Dendritic cell treated with granulocyte-macrophage colony-stimulating factor and Interleukin-4, amounts not matched to agents 40 ng/mL and 50 ng/mL, for 4 days (primary cell): ENCODE measurements at regions of chr1 and their contacts with region 1.

Region 1: DNA sequence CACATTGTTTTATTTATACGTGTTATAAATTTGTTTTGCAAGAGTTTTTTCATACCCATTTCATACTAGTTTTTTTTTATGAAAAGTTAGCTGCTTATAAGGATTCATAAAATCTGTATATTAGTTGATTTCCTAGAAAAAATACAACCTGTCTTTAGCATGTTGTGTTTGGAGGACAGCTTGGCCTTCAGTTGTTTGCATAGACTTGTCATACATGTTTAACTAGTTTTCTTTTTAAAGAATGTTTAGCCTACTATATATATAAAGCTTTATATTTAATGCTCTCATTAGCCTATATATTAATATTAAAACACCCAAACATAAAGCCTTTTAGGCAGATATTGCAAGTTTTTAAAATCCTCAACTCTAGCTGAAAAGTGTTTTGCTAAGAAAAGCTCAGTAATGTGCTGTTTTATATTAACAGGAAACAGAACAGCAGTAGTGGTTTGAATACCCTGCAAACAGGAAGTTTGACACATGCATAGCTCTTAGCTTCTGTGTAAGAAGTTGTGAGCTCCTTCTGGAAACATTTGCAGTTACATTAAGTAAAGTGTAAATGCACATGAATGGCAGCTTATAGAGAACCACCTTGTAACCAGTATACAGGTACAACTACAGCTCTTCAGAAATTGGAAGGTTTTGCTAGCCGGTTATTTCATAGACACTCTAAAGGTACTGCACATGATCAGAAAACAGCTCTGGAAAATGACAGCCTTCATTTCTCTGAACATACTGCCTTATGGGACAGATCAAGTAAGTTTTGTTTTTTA is at the start of gene PRKACB:
- H3K4me3 Mint-ChIP-seq: peak within 1 kb of the TSS; percentile 73
- H3K27ac Mint-ChIP-seq: peak within 1 kb of the TSS; percentile 86
- H3K4me1 Mint-ChIP-seq: peaks cover 9% of the 10 kb centered on the region
- H3K27me3 Mint-ChIP-seq: no peaks in the 10 kb centered on the region

Region 2: GRCh38 chr1:84298328-84298683 is 154.3 kb after region 1 on chr1:
- intact Hi-C with region 1: loop called (anchors 5 kb)
- H3K4me3 Mint-ChIP-seq: peak overlapping the region; percentile 93
- H3K27ac Mint-ChIP-seq: peak overlapping the region; percentile 89
- H3K4me1 Mint-ChIP-seq: peaks cover 21% of the 10 kb centered on the region
- H3K27me3 Mint-ChIP-seq: no peaks in the 10 kb centered on the region

Region 3: GRCh38 chr1:84467298-84467697 is 323.3 kb after region 1 on chr1:
- intact Hi-C with region 1: no loop called
- H3K4me3 Mint-ChIP-seq: no peak overlapping the region
- H3K27ac Mint-ChIP-seq: no peak overlapping the region
- H3K4me1 Mint-ChIP-seq: no peaks in the 10 kb centered on the region
- H3K27me3 Mint-ChIP-seq: peaks cover 6% of the 10 kb centered on the region

Region 4: DNA sequence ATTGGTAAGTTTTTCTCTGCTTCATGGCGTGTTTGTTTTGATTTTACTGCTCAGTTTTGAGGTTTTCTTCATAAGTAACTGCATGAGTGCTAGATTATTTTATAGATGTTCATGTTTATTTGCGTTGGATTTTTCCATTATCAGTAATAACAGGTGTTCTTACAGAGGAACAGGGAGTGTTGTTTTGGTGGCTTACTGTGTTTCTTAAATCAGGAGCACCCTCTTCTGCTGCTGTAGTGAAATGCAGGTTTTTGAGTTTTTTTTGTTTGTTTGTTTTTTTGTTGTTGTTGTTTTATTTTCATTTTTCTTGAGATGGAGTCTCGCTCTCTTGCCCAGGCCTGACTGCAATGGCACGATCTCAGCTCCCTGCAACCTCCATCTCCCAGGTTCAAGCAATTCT is 397.7 kb after region 1 on chr1:
- intact Hi-C with region 1: loop called (anchors 10 kb)
- H3K4me3 Mint-ChIP-seq: no peak overlapping the region
- H3K27ac Mint-ChIP-seq: no peak overlapping the region
- H3K4me1 Mint-ChIP-seq: no peaks in the 10 kb centered on the region
- H3K27me3 Mint-ChIP-seq: no peaks in the 10 kb centered on the region

Region 5: DNA sequence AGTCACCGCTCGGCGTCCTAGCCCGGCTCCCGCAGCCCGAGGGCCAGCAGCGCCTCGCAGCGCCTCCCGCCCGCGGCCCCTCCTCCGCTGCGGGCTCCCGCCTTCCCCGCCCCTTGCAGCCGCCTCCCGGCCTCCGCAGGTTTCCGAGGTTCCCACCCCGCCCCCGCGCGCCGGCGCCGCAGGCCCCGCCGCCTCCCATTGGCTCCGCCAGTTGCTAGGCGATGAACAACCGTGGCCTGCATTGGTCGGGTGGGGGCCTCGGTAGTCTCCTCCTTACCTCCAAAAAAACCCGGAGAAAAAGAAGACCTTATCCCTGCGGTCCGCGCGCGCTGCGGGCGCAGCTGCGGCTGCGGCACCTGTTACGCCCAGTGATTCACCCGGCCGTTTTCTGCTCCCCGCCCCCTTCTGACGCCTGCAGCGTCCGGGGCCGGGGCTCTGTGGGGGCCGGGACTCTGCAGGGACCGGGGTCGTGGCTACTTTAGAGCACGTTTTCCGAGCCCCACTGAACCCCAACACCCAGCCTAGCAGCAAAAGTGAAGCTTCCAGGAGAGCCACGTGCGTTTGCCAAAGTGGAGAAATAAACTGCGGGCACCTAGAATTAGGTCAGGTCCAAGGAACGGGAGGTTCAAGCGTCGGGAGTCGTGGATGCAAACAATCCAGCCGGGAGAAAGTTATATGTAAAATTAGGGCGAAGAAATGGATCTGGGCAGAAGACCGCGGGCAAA is 546.6 kb after region 1 on chr1 and contains the start of gene SSX2IP:
- intact Hi-C with region 1: loop called (anchors 5 kb)
- H3K4me3 Mint-ChIP-seq: peak within 1 kb of the TSS; percentile 96
- H3K27ac Mint-ChIP-seq: peak within 1 kb of the TSS; percentile 92
- H3K4me1 Mint-ChIP-seq: peaks cover 40% of the 10 kb centered on the region
- H3K27me3 Mint-ChIP-seq: no peaks in the 10 kb centered on the region

Region 6: DNA sequence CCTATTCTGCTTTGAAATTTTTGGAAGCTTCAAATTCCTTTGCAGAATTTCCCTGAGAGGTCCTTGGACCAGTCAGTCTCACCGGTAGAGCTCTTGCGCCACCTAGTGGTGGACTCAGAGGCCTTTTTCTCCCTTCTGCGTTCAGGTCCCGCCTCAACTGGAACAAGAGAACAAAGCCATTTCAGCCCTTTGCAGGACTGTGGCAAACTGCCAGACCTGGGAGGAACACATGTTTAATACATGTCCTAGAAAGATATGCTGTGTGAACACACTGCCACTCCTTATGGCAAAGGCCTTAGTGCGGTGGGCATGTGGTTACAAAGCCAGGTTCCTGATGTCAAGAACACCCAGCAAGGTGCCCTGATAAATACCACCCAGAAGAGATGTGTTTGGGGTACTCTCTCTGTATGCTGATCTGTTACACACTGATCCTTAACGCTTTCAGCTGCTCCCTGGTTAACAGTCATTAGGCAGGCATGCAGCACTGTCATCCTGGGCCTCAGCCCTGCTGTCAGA is 628.5 kb after region 1 on chr1:
- intact Hi-C with region 1: loop called (anchors 5 kb)
- H3K4me3 Mint-ChIP-seq: no peak overlapping the region
- H3K27ac Mint-ChIP-seq: no peak overlapping the region
- H3K4me1 Mint-ChIP-seq: no peaks in the 10 kb centered on the region
- H3K27me3 Mint-ChIP-seq: peaks cover 1% of the 10 kb centered on the region